Heart left ventricle (tissue), 16 donors: ENCODE measurements at regions of chr12 and their contacts with region 1.

Region 1: DNA sequence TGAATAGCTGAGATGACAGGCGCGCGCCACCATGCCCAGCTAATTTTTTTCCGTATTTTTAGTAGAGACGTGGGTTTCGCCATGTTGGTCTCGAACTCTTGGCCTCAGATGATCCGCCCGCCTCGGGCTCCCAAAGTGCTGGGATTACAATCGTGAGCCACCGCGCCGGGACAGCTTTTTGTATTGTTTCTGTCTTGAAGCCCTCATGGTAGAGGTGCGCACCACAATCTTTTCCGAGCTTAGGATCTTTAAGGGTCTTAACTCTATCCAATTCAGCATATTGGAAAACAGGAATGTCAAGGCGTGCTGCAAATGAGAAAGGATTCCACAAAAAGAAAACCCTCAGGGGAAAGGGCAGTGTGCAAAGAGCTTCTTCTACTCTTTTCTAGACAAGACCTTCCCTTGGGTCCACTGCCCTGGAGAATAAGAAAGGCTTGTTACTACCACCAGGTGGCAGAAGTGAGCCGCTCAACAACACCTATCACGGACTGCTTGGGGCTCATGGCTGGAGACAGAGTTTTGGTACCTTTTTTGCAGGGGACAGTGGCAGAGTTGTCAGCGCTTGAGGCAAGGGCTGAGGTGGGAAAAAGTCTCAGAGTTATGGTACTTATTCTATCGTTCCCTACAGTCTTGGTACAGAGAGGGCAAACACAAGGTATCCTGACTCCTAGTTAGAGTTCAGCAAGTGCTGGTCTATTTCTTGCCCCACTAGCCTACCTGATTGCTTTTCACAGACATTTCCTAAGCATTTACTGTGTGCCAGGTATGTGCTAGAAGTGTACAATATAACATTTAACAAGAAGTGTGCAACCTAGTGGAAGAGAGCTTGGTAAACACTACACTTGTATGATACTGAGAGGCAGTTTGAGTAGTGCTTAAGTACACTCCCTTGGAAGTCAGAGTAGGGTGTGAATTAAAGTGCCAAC is 16.4 kb upstream of the SP7 start:
- DNase-seq: peak; percentile 77 to 86 (median 81)
- ATAC-seq: peak; percentile 92 to 97 (median 96)
- H3K4me3 ChIP-seq: no peak overlapping the region
- H3K27ac ChIP-seq: no peak overlapping the region
- H3K4me1 ChIP-seq: peaks cover 0 to 9% (median 0%) of the 10 kb centered on the region in 12 donors
- H3K27me3 ChIP-seq: no peaks in the 10 kb centered on the region
- CTCF ChIP-seq: peak; percentile 82 to 93 (median 88)
- POLR2A ChIP-seq: no peak

Region 2: DNA sequence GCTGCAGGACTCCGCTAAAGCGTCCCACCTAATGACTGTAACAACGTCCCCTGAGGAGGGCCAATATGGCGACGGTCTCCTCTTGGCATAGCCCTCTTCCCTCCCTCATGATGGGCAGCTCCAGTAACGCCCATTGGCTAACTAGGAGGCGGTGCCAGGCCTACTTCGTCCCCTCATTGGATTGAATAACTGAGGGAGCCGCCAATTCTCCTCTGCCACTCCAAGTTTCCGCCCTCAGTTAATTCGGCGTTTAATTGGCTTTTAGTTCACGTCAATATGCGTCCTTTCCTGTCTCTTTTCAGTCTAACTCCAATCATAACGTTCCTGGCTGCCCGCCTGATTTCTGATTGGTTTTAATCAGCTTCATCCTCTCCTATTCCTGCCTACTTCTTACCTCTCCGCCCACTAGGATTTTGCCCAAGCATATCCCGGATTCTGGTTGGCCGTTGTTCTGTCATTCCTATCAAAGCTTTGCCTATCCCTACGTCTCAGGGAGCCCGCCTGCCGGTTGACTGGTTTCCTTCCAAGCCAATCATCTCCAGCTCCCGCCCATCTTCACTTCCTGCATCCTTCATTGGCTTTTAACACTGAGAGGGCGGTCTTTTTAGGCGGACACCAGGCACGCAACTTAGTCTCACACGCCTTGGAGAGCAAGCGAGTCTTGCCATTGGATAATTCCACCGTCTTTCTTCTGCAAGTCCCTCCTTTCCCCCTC is 27.0 kb after region 1 on chr12:
- intact Hi-C with region 1: loop called in 1 of 10 experiments (anchors 2 kb)
- DNase-seq: peak; percentile 95 to 100 (median 99)
- ATAC-seq: peak; percentile 87 to 91 (median 90)
- H3K4me3 ChIP-seq: peak overlapping the region; percentile 27 to 85 (median 64)
- H3K27ac ChIP-seq: peak overlapping the region; percentile 90 to 100 (median 98)
- H3K4me1 ChIP-seq: peaks cover 22 to 46% (median 42%) of the 10 kb centered on the region in 12 donors
- H3K27me3 ChIP-seq: no peaks in the 10 kb centered on the region
- CTCF ChIP-seq: no peak
- POLR2A ChIP-seq: peak; percentile 43 to 89

Region 3: GRCh38 chr12:53389702-53390101 is 37.1 kb after region 1 on chr12:
- intact Hi-C with region 1: loop called in 1 of 10 experiments (anchors 5 kb)
- DNase-seq: no peak
- ATAC-seq: no peak
- H3K4me3 ChIP-seq: no peak overlapping the region
- H3K27ac ChIP-seq: peak overlapping the region in 5 of 12 donors; percentile 11 to 79 (median 49)
- H3K4me1 ChIP-seq: peaks cover 8 to 73% (median 59%) of the 10 kb centered on the region in 12 donors
- H3K27me3 ChIP-seq: no peaks in the 10 kb centered on the region
- CTCF ChIP-seq: no peak
- POLR2A ChIP-seq: no peak

Region 4: GRCh38 chr12:53419761-53420160 is 67.2 kb after region 1 on chr12:
- intact Hi-C with region 1: loop called (anchors 1 to 2 kb)
- DNase-seq: no peak
- ATAC-seq: no peak
- H3K4me3 ChIP-seq: no peak overlapping the region
- H3K27ac ChIP-seq: no peak overlapping the region
- H3K4me1 ChIP-seq: peaks cover 0 to 28% (median 14%) of the 10 kb centered on the region in 12 donors
- H3K27me3 ChIP-seq: no peaks in the 10 kb centered on the region
- CTCF ChIP-seq: no peak
- POLR2A ChIP-seq: no peak

Region 5: GRCh38 chr12:53508534-53509199 is 156.1 kb after region 1 on chr12:
- intact Hi-C with region 1: loop called (anchors 1 to 5 kb)
- DNase-seq: peak; percentile 83 to 88 (median 86)
- ATAC-seq: peak; percentile 75 to 90 (median 86)
- H3K4me3 ChIP-seq: no peak overlapping the region
- H3K27ac ChIP-seq: peak overlapping the region in 10 of 12 donors; percentile 9 to 74 (median 50)
- H3K4me1 ChIP-seq: peaks cover 0 to 17% (median 9%) of the 10 kb centered on the region in 12 donors
- H3K27me3 ChIP-seq: no peaks in the 10 kb centered on the region
- CTCF ChIP-seq: peak; percentile 81 to 95 (median 90)
- POLR2A ChIP-seq: peak in 1 of 2 donors; percentile 13